ENCODE measurements at regions of chr5 and their contacts with region 1.

Region 1: DNA sequence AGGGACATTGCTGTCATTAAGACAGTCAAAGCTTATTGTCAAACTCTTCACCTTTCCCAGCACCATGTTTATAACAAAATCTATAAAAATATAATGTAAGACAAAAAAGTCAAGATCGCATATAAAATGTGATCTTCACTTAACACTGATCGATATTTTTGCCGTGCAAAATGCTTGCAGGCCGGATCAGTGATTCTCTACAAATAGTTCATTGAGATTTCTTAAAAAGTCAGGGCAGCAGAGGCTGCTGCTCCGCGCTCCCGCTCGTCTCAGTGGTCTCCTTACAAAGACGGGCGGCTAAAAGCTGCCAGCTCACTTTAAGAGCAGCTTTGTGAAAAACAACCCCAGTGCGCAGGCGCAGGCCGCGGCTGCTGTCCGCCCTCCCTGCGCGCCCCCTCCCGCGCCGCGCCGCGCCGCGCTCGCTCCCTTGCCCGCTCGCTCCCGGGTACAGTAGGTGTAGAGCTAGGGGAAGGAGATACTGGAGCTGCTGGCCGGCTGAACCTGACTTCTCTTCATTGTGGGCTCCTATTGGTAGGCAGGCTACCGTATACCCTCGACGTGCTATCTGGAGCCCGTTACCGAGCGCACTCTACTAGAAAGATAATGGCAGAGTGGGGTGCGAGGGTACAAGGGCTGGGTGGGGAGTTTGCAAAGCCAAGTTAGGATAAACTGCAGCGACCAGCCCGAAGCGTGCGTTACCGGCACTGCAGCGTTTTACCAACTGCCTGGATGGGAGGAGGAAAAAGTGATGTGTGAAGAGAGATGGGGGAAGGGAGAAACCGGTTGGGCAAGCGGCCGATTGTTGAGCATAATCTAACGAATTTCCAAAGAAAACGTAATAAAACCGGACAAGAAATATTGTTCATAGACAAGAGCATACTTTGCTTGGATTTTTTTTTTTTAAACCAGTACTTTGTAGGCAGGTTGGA is at the start of gene ARRDC3:
- DNase-seq: peak; percentile 98
- H3K4me3 Mint-ChIP-seq: peak within 1 kb of the TSS; percentile 87
- H3K27ac Mint-ChIP-seq: peak within 1 kb of the TSS; percentile 97
- H3K4me1 Mint-ChIP-seq: peaks cover 24% of the 10 kb centered on the region
- H3K27me3 Mint-ChIP-seq: no peaks in the 10 kb centered on the region
- total RNA-seq, gene ARRDC3: 46.5 to 47.1 TPM

Region 2: DNA sequence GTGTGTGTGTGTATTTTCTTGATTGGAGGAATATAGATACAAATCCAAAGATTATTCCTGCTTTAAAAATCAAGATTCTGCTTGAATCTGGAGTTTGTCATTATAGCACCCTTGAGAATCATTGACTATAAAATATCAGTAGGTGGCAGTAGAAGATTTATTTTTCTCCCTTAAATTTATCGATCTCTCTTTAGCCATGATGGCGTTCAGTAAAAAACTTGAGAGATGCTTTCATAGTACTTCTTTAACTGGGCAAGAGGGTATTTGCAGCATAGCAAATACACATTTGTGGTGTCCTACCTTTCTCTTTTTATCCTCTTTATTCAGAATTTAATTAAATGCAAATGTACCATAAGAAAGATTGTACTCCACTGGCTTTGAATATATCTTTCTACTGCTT is 517.0 kb before region 1 on chr5:
- CTCF ChIA-PET with region 1: interaction called, 37 read pairs
- POLR2A ChIA-PET with region 1: interaction called, 3 read pairs
- DNase-seq: no peak
- H3K4me3 Mint-ChIP-seq: no peak overlapping the region
- H3K27ac Mint-ChIP-seq: no peak overlapping the region
- H3K4me1 Mint-ChIP-seq: peaks cover 2% of the 10 kb centered on the region
- H3K27me3 Mint-ChIP-seq: peaks cover 27% of the 10 kb centered on the region

Region 3: GRCh38 chr5:91183737-91184136 is 199.6 kb before region 1 on chr5:
- CTCF ChIA-PET with region 1: interaction called, 4 read pairs
- POLR2A ChIA-PET with region 1: interaction called, 21 read pairs
- DNase-seq: no peak
- H3K4me3 Mint-ChIP-seq: no peak overlapping the region
- H3K27ac Mint-ChIP-seq: no peak overlapping the region
- H3K4me1 Mint-ChIP-seq: peaks cover 14% of the 10 kb centered on the region
- H3K27me3 Mint-ChIP-seq: peaks cover 20% of the 10 kb centered on the region

Region 4: GRCh38 chr5:91266184-91266705 is 117.0 kb before region 1 on chr5:
- CTCF ChIA-PET with region 1: interaction called, 3 read pairs
- POLR2A ChIA-PET with region 1: interaction called, 45 read pairs
- DNase-seq: no peak
- H3K4me3 Mint-ChIP-seq: no peak overlapping the region
- H3K27ac Mint-ChIP-seq: no peak overlapping the region
- H3K4me1 Mint-ChIP-seq: peaks cover 25% of the 10 kb centered on the region
- H3K27me3 Mint-ChIP-seq: no peaks in the 10 kb centered on the region

Region 5: GRCh38 chr5:91301106-91301846 is 82.0 kb before region 1 on chr5:
- CTCF ChIA-PET with region 1: interaction called, 10 read pairs
- POLR2A ChIA-PET with region 1: interaction called, 7 read pairs
- DNase-seq: no peak
- H3K4me3 Mint-ChIP-seq: no peak overlapping the region
- H3K27ac Mint-ChIP-seq: no peak overlapping the region
- H3K4me1 Mint-ChIP-seq: peaks cover 2% of the 10 kb centered on the region
- H3K27me3 Mint-ChIP-seq: no peaks in the 10 kb centered on the region

Region 6: DNA sequence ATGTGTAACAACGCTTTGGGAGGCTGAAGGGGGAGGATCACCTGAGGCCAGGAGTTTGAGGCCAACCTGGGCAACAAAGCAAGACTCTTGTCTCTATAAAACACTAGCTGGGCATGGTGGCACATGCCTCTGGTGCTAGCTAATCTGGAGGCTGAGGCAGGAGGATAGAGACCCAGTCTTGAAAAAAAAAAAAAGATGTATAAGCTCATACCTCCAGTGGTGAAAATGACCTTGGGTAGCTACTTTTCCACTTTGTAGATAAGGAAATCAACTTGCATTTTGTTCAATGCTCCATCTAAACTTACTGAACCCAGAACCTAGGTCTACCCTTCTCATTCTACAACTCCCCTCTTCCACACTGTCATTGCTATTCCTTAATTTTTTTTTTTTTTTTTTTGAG is 16.7 kb before region 1 on chr5:
- CTCF ChIA-PET with region 1: interaction called, 14 read pairs
- POLR2A ChIA-PET with region 1: interaction called, 25 read pairs
- DNase-seq: no peak
- H3K4me3 Mint-ChIP-seq: no peak overlapping the region
- H3K27ac Mint-ChIP-seq: no peak overlapping the region
- H3K4me1 Mint-ChIP-seq: peaks cover 15% of the 10 kb centered on the region
- H3K27me3 Mint-ChIP-seq: no peaks in the 10 kb centered on the region

Measured in activated CD4-positive, alpha-beta memory T cell treated with anti-CD3 and anti-CD28 coated beads, Interleukin-2, amount 10 ng/mL, durations not matched to agents 7 days and 5 days (primary cell).